CD8-positive, alpha-beta T cell (primary cell): ENCODE measurements at regions of chr2 and their contacts with region 1.

Region 1: GRCh38 chr2:86440631-86441391 is at the start of gene KDM3A:
- DNase-seq: peak; percentile 98 to 100 (median 99)
- ATAC-seq: peak; percentile 76
- H3K4me3 ChIP-seq: peak within 1 kb of the TSS; percentile 74 to 80
- H3K4me3 Mint-ChIP-seq: peak within 1 kb of the TSS; percentile 97
- H3K27ac ChIP-seq: peak within 1 kb of the TSS; percentile 85 to 91
- H3K27ac Mint-ChIP-seq: peak within 1 kb of the TSS; percentile 99
- H3K4me1 ChIP-seq: peaks cover 31% of the 10 kb centered on the region
- H3K4me1 Mint-ChIP-seq: peaks cover 44% of the 10 kb centered on the region
- H3K27me3 ChIP-seq: no peaks in the 10 kb centered on the region
- H3K27me3 Mint-ChIP-seq: no peaks in the 10 kb centered on the region
- CTCF ChIP-seq: no peak
- total RNA-seq, gene KDM3A: 226 to 227 TPM

Region 2: DNA sequence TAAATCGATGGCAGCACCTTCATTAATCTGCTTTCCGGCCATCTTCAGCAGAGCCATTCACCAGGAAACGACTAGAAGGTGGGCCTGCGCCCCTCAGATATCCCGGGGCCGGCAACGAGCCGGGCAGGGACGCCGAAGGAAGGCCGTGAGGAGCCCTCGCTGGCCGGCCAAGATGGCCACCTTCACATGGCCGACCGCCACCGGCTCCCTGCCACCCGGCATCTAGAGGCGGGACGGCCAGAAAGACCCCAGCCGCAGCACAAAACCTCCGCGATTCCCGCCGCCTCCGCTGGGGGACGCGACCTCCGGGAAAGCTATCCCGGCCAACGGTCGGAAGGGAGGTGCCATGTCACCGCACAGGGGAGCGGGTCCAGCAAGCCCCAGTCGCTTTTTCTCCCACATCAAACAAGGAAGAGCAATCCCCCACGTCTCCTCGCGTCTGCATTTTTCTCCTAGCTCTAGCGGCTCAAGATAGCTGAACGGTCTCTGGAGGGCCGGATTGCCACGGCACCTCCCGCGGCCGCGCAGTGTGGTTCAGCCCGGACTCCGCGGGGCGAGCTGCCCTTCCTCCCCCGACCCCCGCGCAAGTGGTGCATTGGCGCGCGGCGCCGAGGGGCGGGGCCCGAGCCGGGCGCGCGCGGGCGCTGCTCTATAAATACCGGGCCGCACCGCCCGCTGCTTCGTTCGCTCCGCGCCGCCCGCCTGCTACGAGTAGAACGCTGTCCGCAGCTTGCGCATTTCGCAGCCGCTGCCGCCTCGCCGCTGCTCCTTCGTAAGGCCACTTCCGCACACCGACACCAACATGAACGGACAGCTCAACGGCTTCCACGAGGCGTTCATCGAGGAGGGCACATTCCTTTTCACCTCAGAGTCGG is 902.1 kb before region 1 on chr2 and contains the start of gene MAT2A:
- CTCF ChIA-PET with region 1: no interaction called
- POLR2A ChIA-PET with region 1: no interaction called
- intact Hi-C with region 1: no loop called
- DNase-seq: peak; percentile 71 to 96 (median 87)
- ATAC-seq: peak; percentile 77
- H3K4me3 ChIP-seq: peak within 1 kb of the TSS; percentile 96
- H3K4me3 Mint-ChIP-seq: peak within 1 kb of the TSS; percentile 94
- H3K27ac ChIP-seq: peak within 1 kb of the TSS; percentile 87 to 91
- H3K27ac Mint-ChIP-seq: peak within 1 kb of the TSS; percentile 93
- H3K4me1 ChIP-seq: peaks cover 28% of the 10 kb centered on the region
- H3K4me1 Mint-ChIP-seq: peaks cover 47% of the 10 kb centered on the region
- H3K27me3 ChIP-seq: no peaks in the 10 kb centered on the region
- H3K27me3 Mint-ChIP-seq: no peaks in the 10 kb centered on the region
- CTCF ChIP-seq: no peak
- total RNA-seq, gene MAT2A: 105 to 107 TPM

Region 3: DNA sequence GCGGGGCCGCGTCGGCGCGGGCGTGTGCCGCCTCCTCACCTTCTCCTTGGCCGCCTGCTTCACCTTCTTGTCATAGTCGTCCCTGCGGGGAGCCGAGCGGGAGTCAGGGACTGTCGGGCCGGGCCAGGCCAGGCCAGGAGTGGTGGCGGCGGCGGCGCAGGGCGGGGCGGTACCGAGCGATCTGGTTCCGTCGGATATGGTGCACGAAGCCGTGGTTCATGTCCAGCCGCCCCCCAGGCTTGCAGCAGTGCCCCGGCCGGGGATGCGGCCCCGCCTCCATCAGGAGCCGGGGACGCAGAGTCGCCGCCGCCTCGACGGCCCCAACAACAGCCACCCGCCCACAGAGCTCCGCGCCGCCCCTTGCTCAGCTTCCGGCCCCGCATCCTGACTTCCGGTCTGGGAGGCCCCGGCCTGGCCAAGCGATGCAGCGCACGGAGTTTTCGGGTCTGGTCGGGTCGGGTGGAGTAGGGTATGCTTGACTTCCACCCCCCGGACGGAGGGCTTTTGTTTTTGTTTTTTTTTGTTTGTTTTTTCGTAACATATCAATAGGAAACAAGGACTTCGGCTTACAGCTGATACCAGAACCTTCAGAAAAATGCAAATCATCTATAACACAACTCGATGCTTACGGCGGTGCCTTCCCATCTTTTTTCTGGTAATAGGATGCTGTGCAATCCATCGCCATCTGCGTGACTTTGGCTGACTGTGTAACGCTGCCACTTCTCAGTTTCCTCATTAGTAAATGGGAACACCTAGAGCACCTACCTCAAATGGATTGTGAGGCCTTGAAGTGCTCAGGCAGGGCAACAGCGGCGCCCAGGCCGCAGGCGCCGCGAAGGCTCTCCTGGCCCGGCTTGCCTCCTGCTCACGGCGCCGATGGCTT is 828.9 kb before region 1 on chr2 and contains the start of gene C2orf68:
- CTCF ChIA-PET with region 1: no interaction called
- POLR2A ChIA-PET with region 1: no interaction called
- intact Hi-C with region 1: loop called in 1 of 2 experiments (anchors 10 kb)
- DNase-seq: peak; percentile 49 to 90 (median 83)
- ATAC-seq: peak; percentile 55
- H3K4me3 ChIP-seq: peak within 1 kb of the TSS; percentile 53 to 55
- H3K4me3 Mint-ChIP-seq: peak within 1 kb of the TSS; percentile 97
- H3K27ac ChIP-seq: peak within 1 kb of the TSS; percentile 61 to 70
- H3K27ac Mint-ChIP-seq: peak within 1 kb of the TSS; percentile 95
- H3K4me1 ChIP-seq: peaks cover 26% of the 10 kb centered on the region
- H3K4me1 Mint-ChIP-seq: peaks cover 39% of the 10 kb centered on the region
- H3K27me3 ChIP-seq: no peaks in the 10 kb centered on the region
- H3K27me3 Mint-ChIP-seq: no peaks in the 10 kb centered on the region
- CTCF ChIP-seq: no peak
- total RNA-seq, gene C2orf68: 23.2 to 27.9 TPM

Region 4: GRCh38 chr2:86195055-86195807 is 245.6 kb before region 1 on chr2 and contains the start of gene IMMT:
- CTCF ChIA-PET with region 1: no interaction called
- POLR2A ChIA-PET with region 1: interaction called, 15 read pairs
- intact Hi-C with region 1: loop called (anchors 1 to 2 kb)
- DNase-seq: peak; percentile 79 to 97 (median 93)
- ATAC-seq: peak; percentile 90
- H3K4me3 ChIP-seq: peak within 1 kb of the TSS; percentile 96 to 98
- H3K4me3 Mint-ChIP-seq: peak within 1 kb of the TSS; percentile 89
- H3K27ac ChIP-seq: peak within 1 kb of the TSS; percentile 91 to 98
- H3K27ac Mint-ChIP-seq: peak within 1 kb of the TSS; percentile 90
- H3K4me1 ChIP-seq: peaks cover 37% of the 10 kb centered on the region
- H3K4me1 Mint-ChIP-seq: peaks cover 63% of the 10 kb centered on the region
- H3K27me3 ChIP-seq: no peaks in the 10 kb centered on the region
- H3K27me3 Mint-ChIP-seq: no peaks in the 10 kb centered on the region
- CTCF ChIP-seq: no peak
- total RNA-seq, gene IMMT: 34.3 to 35.8 TPM

Region 5: DNA sequence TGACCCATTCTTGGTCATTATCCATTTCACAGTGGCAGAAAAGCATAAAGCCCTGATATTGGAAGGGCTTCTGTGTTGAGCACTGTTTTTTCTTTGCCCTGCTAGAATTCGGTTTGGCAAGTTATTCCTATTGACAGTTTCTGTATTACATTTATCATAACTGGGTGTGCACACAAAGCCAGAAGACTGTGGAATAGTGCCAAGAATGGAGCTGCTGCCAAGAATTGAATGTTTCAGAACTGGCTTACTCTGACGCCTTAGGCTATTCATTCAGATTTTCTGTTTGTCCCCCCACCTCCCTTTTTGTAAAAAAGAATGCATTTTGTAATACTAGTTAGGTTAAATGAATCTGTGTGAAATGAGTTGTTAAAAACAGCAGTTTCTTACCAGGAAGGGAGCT is 13.0 kb after region 1 on chr2:
- CTCF ChIA-PET with region 1: no interaction called
- POLR2A ChIA-PET with region 1: interaction called, 27 read pairs
- intact Hi-C with region 1: loop called in 1 of 2 experiments (anchors 2 kb)
- DNase-seq: no peak
- ATAC-seq: no peak
- H3K4me3 ChIP-seq: no peak overlapping the region
- H3K4me3 Mint-ChIP-seq: no peak overlapping the region
- H3K27ac ChIP-seq: no peak overlapping the region
- H3K27ac Mint-ChIP-seq: no peak overlapping the region
- H3K4me1 ChIP-seq: peaks cover 8% of the 10 kb centered on the region
- H3K4me1 Mint-ChIP-seq: peaks cover 42% of the 10 kb centered on the region
- H3K27me3 ChIP-seq: no peaks in the 10 kb centered on the region
- H3K27me3 Mint-ChIP-seq: no peaks in the 10 kb centered on the region
- CTCF ChIP-seq: no peak

Region 6: DNA sequence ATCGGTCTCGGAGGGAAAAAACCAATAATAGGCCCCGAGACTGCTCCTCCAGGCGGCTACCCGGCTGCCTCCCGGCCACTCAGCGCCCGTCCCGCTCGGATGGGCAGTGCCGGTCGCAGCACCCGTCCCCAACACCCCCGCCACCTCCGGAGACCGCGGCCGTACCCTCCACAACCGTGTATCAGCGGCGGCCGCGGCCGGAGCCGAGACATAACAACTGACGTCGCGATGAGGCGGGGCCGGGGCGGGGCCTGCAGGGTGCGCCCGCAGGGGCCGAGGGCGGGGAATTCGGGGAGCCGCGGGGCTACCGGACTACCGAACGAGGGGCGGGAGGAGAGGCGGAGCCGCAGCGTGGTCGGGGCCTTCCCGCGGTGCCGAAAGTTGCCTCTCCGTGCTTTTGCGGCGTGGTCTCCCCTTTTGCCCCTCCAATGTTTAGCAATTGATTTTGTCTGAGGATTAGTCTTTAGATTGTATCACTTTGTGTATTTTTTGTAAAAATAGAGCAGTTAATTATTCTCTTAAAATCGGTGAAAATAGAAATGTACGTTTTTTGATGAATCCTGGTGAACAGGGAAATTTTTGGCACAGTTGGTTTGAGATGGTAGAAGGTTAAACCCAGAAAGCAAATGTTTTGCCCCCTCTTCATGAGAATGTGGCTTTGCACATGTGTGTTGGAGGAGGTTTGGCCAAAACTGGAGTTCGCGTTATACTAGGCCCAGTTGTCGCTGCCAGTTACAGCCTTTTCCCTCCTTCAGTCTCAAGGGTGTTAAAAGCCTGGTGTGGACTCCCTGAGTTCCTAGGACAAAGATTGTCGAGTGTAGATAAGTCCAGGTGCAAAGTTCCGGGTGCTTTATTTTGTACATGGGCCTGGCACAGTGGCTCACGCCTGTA is 183.1 kb after region 1 on chr2 and contains the start of gene RNF103:
- CTCF ChIA-PET with region 1: no interaction called
- POLR2A ChIA-PET with region 1: interaction called, 14 read pairs
- intact Hi-C with region 1: loop called (anchors 1 kb)
- DNase-seq: peak; percentile 80 to 97 (median 95)
- ATAC-seq: peak; percentile 87
- H3K4me3 ChIP-seq: peak within 1 kb of the TSS; percentile 64 to 76
- H3K4me3 Mint-ChIP-seq: peak within 1 kb of the TSS; percentile 95
- H3K27ac ChIP-seq: peak within 1 kb of the TSS; percentile 91 to 93
- H3K27ac Mint-ChIP-seq: peak within 1 kb of the TSS; percentile 94
- H3K4me1 ChIP-seq: peaks cover 27% of the 10 kb centered on the region
- H3K4me1 Mint-ChIP-seq: peaks cover 37% of the 10 kb centered on the region
- H3K27me3 ChIP-seq: no peaks in the 10 kb centered on the region
- H3K27me3 Mint-ChIP-seq: no peaks in the 10 kb centered on the region
- CTCF ChIP-seq: no peak
- total RNA-seq, gene RNF103: 118 to 120 TPM

Region 7: GRCh38 chr2:86825693-86826381 is 385.0 kb after region 1 on chr2:
- CTCF ChIA-PET with region 1: no interaction called
- POLR2A ChIA-PET with region 1: interaction called, 10 read pairs
- intact Hi-C with region 1: no loop called
- DNase-seq: peak; percentile 70 to 96 (median 82)
- ATAC-seq: peak; percentile 84
- H3K4me3 ChIP-seq: peak overlapping the region; percentile 85 to 88
- H3K4me3 Mint-ChIP-seq: peak overlapping the region; percentile 90
- H3K27ac ChIP-seq: peak overlapping the region; percentile 81 to 91
- H3K27ac Mint-ChIP-seq: peak overlapping the region; percentile 99
- H3K4me1 ChIP-seq: peaks cover 76% of the 10 kb centered on the region
- H3K4me1 Mint-ChIP-seq: peaks cover 77% of the 10 kb centered on the region
- H3K27me3 ChIP-seq: no peaks in the 10 kb centered on the region
- H3K27me3 Mint-ChIP-seq: no peaks in the 10 kb centered on the region
- CTCF ChIP-seq: no peak